HepG2 (cell line): ENCODE measurements at regions of chr3 and their contacts with region 1.

Region 1: GRCh38 chr3:61561374-61562041 is at the start of gene PTPRG:
- DNase-seq: peak; percentile 82
- ATAC-seq: peak; percentile 73
- H3K4me3 ChIP-seq: peak within 1 kb of the TSS; percentile 86 to 98 (median 86)
- H3K27ac ChIP-seq: peak within 1 kb of the TSS; percentile 100
- H3K4me1 ChIP-seq: peaks cover 44% of the 10 kb centered on the region
- H3K27me3 ChIP-seq: peaks cover 0 to 2% of the 10 kb centered on the region in 2 experiments; a peak in 1 of 5 replicates
- CTCF ChIP-seq: no peak; the same call in 1 of the 2 replicates
- EP300 ChIP-seq: no peak
- POLR2A ChIP-seq: peak; percentile 76 to 79
- RAD21 ChIP-seq: peak; percentile 6; the same call in 1 of the 2 replicates
- total RNA-seq, gene PTPRG: 17.8 and 25.3 TPM in 2 replicates

Region 2: DNA sequence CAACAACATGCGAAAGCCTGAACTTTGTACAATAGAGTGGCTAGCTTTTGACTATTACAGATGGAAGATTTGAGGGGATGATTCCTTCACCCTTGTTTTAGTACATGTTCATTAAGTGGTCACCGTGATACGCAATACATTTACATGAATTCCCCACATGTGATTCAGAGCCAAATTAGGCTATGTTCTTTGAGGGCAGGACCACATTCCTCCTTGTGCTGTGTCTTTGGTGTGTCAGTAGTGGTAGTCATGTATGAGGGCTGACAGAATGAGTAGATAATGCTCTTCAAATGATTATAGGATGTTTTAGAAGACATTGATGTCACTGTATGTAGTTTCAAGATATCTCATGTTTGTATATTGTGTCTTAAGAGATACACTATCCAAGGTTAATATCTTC is 11.9 kb after region 1 on chr3:
- CTCF ChIA-PET with region 1: no interaction called
- POLR2A ChIA-PET with region 1: interaction called, 12 read pairs
- in situ Hi-C with region 1: no loop called
- intact Hi-C with region 1: no loop called
- DNase-seq: no peak
- ATAC-seq: no peak
- H3K4me3 ChIP-seq: no peak overlapping the region
- H3K27ac ChIP-seq: no peak overlapping the region
- H3K4me1 ChIP-seq: peaks cover 21% of the 10 kb centered on the region
- H3K27me3 ChIP-seq: no peaks in the 10 kb centered on the region
- CTCF ChIP-seq: no peak
- EP300 ChIP-seq: no peak
- POLR2A ChIP-seq: no peak
- RAD21 ChIP-seq: no peak

Region 3: GRCh38 chr3:61627768-61628185 is 66.3 kb after region 1 on chr3:
- CTCF ChIA-PET with region 1: no interaction called
- POLR2A ChIA-PET with region 1: interaction called, 7 read pairs
- in situ Hi-C with region 1: no loop called
- intact Hi-C with region 1: loop called (anchors 5 kb)
- DNase-seq: peak; percentile 95
- ATAC-seq: peak; percentile 94
- H3K4me3 ChIP-seq: peak overlapping the region in 1 of 3 experiments; percentile 30; a peak in 2 of 6 replicates
- H3K27ac ChIP-seq: peak overlapping the region; percentile 74
- H3K4me1 ChIP-seq: peaks cover 54% of the 10 kb centered on the region
- H3K27me3 ChIP-seq: no peaks in the 10 kb centered on the region
- CTCF ChIP-seq: no peak
- EP300 ChIP-seq: peak in 1 of 2 experiments; percentile 65; a peak in 1 of 4 replicates
- POLR2A ChIP-seq: no peak
- RAD21 ChIP-seq: no peak

Region 4: DNA sequence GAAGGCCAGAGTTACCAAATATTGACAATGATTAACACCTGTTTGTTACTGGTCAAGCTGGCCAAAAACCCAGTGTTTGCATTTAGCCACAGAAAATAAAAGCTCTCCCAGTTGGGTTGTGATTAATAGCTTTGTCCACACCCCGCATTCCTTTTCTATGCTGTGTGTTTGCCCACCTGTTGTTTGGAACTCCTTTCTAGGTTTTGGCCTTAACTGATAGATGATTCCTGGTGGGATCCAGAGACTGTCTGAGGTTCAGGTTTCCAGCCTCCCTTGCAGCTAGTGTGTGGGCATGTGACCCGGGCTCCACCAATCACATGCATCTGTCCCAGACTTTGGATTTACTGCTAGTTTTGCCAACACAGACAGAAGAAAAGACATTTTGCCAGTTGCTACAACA is 83.6 kb after region 1 on chr3:
- CTCF ChIA-PET with region 1: no interaction called
- POLR2A ChIA-PET with region 1: interaction called, 13 read pairs
- in situ Hi-C with region 1: no loop called
- intact Hi-C with region 1: no loop called
- DNase-seq: peak; percentile 77
- ATAC-seq: peak; percentile 90
- H3K4me3 ChIP-seq: no peak overlapping the region; a peak in 1 of 6 replicates
- H3K27ac ChIP-seq: no peak overlapping the region
- H3K4me1 ChIP-seq: peaks cover 28% of the 10 kb centered on the region
- H3K27me3 ChIP-seq: no peaks in the 10 kb centered on the region
- CTCF ChIP-seq: no peak
- EP300 ChIP-seq: peak in 1 of 2 experiments; percentile 44; a peak in 1 of 4 replicates
- POLR2A ChIP-seq: no peak
- RAD21 ChIP-seq: no peak

Region 5: DNA sequence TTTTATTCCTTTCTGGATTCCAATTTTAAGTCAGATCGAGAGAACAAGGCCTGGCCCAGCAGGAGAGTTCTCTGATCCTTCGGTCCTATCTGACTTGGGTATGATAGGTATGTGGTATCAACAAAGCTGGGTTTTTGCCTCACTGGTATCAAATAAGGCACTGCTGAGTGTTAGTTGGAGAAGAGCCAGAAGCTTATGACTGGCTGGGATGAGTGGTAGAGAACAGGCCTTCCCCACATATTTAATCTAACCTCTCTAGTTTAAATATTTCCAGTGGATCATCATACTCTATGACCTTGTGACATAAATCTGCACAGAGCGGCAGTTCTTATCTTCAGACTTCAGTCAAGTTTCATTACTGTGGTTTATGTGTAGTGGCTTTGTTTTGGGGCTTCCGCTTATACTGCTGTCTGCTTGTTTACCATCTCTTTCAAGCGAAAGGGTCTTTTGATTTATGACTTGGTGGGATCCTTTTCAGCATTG is 164.4 kb after region 1 on chr3:
- CTCF ChIA-PET with region 1: no interaction called
- POLR2A ChIA-PET with region 1: no interaction called
- in situ Hi-C with region 1: no loop called
- intact Hi-C with region 1: loop called (anchors 5 kb)
- DNase-seq: peak; percentile 95
- ATAC-seq: peak; percentile 90
- H3K4me3 ChIP-seq: peak overlapping the region in 1 of 3 experiments; percentile 24; a peak in 1 of 6 replicates
- H3K27ac ChIP-seq: peak overlapping the region; percentile 76
- H3K4me1 ChIP-seq: peaks cover 75% of the 10 kb centered on the region
- H3K27me3 ChIP-seq: no peaks in the 10 kb centered on the region
- CTCF ChIP-seq: no peak
- EP300 ChIP-seq: peak in 1 of 2 experiments; percentile 84; a peak in 2 of 4 replicates
- POLR2A ChIP-seq: no peak
- RAD21 ChIP-seq: no peak

Region 6: DNA sequence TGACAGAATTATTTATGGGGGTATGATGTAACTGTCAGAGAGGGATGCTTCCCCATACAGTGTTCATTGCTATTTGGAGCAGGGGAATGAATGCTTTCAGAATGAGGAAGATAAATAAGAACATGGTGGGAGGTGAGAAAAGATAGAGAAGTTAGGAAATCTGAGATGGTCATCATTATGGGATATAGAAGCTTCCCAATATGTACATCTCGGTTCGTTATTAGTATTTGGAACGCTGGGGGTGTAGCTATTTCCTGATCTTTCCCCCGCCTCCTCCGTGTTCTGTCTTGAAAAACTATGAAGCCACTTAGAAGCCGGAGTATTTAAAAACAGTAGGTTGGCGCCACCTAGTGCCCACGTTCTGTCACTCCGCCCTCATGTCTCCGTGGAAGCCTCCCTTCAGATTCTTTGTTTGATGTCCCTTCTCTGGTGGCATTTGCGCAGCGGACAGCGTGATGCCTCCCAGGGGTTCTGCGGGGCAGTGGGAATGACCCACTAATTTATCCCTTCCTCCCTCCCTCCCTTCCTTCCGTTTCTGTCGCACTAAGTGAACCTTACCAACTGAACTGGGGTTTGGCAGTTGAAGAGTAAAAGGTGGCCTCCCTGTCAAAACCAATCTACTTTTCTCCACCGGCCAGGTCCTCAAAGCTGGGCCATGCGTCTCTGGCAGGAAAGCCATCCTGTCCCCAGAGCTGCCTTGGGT is 627.3 kb after region 1 on chr3:
- CTCF ChIA-PET with region 1: no interaction called
- POLR2A ChIA-PET with region 1: interaction called, 5 read pairs
- in situ Hi-C with region 1: loop called (anchors 25 kb)
- intact Hi-C with region 1: loop called (anchors 10 kb)
- DNase-seq: peak; percentile 48
- ATAC-seq: peak; percentile 63
- H3K4me3 ChIP-seq: no peak overlapping the region
- H3K27ac ChIP-seq: no peak overlapping the region
- H3K4me1 ChIP-seq: peaks cover 21% of the 10 kb centered on the region
- H3K27me3 ChIP-seq: no peaks in the 10 kb centered on the region
- CTCF ChIP-seq: peak; percentile 82
- EP300 ChIP-seq: no peak
- POLR2A ChIP-seq: no peak
- RAD21 ChIP-seq: peak; percentile 66; the same call in 1 of the 2 replicates